HCT116 (cell line): ENCODE measurements at regions of chr1 and their contacts with region 1.

Region 1: GRCh38 chr1:28648474-28649198 is at the start of gene RNU11:
- DNase-seq: peak; percentile 98
- ATAC-seq: peak; percentile 74
- H3K4me3 ChIP-seq: peak within 1 kb of the TSS; percentile 31 to 51
- H3K27ac ChIP-seq: peak within 1 kb of the TSS; percentile 86
- H3K4me1 ChIP-seq: peaks cover 18 to 36% of the 10 kb centered on the region in 2 experiments
- H3K27me3 ChIP-seq: no peaks in the 10 kb centered on the region
- CTCF ChIP-seq: no peak
- POLR2A ChIP-seq: peak; percentile 100
- RAD21 ChIP-seq: no peak
- total RNA-seq, gene RNU11: not detected

Region 2: GRCh38 chr1:28505406-28506187 is 143.0 kb before region 1 on chr1 and contains the start of gene RCC1:
- CTCF ChIA-PET with region 1: no interaction called
- POLR2A ChIA-PET with region 1: interaction called, 12 read pairs
- RAD21 ChIA-PET with region 1: no interaction called
- intact Hi-C with region 1: no loop called
- DNase-seq: peak; percentile 97
- ATAC-seq: peak; percentile 62
- H3K4me3 ChIP-seq: peak within 1 kb of the TSS; percentile 82 to 94
- H3K27ac ChIP-seq: peak within 1 kb of the TSS; percentile 97
- H3K4me1 ChIP-seq: peaks cover 29 to 72% of the 10 kb centered on the region in 2 experiments
- H3K27me3 ChIP-seq: no peaks in the 10 kb centered on the region
- CTCF ChIP-seq: no peak
- POLR2A ChIP-seq: peak; percentile 99
- RAD21 ChIP-seq: no peak
- total RNA-seq, gene RCC1: 124 TPM

Region 3: GRCh38 chr1:28581536-28582247 is 66.9 kb before region 1 on chr1:
- CTCF ChIA-PET with region 1: no interaction called
- POLR2A ChIA-PET with region 1: interaction called, 16 read pairs
- RAD21 ChIA-PET with region 1: no interaction called
- intact Hi-C with region 1: no loop called
- DNase-seq: peak; percentile 90
- ATAC-seq: peak; percentile 79
- H3K4me3 ChIP-seq: peak overlapping the region; percentile 97 to 99
- H3K27ac ChIP-seq: peak overlapping the region; percentile 93
- H3K4me1 ChIP-seq: peaks cover 9 to 29% of the 10 kb centered on the region in 2 experiments; a peak in 3 of 4 replicates
- H3K27me3 ChIP-seq: no peaks in the 10 kb centered on the region
- CTCF ChIP-seq: 0 out of 6 replicates have a peak, but pooled peaks of 1 of the 3 experiments have one; percentile 2
- POLR2A ChIP-seq: peak; percentile 99
- RAD21 ChIP-seq: no peak

Region 4: GRCh38 chr1:28736450-28737306 is 88.0 kb after region 1 on chr1 and contains the start of gene YTHDF2:
- CTCF ChIA-PET with region 1: interaction called, 4 read pairs
- POLR2A ChIA-PET with region 1: interaction called, 27 read pairs
- RAD21 ChIA-PET with region 1: interaction called in 1 of 2 experiments, 3 read pairs
- intact Hi-C with region 1: loop called (anchors 1 kb)
- DNase-seq: peak; percentile 89
- ATAC-seq: peak; percentile 94
- H3K4me3 ChIP-seq: peak within 1 kb of the TSS; percentile 91 to 92
- H3K27ac ChIP-seq: peak within 1 kb of the TSS; percentile 97
- H3K4me1 ChIP-seq: peaks cover 11 to 20% of the 10 kb centered on the region in 2 experiments
- H3K27me3 ChIP-seq: no peaks in the 10 kb centered on the region
- CTCF ChIP-seq: peak; percentile 76 to 94 (median 85)
- POLR2A ChIP-seq: peak; percentile 29
- RAD21 ChIP-seq: peak; percentile 42
- total RNA-seq, gene YTHDF2: 90.6 TPM

Region 5: GRCh38 chr1:28885977-28886730 is 237.5 kb after region 1 on chr1:
- CTCF ChIA-PET with region 1: no interaction called
- POLR2A ChIA-PET with region 1: interaction called, 10 read pairs
- RAD21 ChIA-PET with region 1: no interaction called
- intact Hi-C with region 1: no loop called
- DNase-seq: no peak
- ATAC-seq: no peak
- H3K4me3 ChIP-seq: peak overlapping the region in 1 of 2 experiments; percentile 95; a peak in 2 of 4 replicates
- H3K27ac ChIP-seq: no peak overlapping the region; the same call in 1 of the 2 replicates
- H3K4me1 ChIP-seq: peaks cover 23 to 56% of the 10 kb centered on the region in 2 experiments
- H3K27me3 ChIP-seq: no peaks in the 10 kb centered on the region
- CTCF ChIP-seq: no peak
- POLR2A ChIP-seq: no peak
- RAD21 ChIP-seq: no peak